A549 (cell line): ENCODE measurements at regions of chr12 and their contacts with region 1.

Region 1: DNA sequence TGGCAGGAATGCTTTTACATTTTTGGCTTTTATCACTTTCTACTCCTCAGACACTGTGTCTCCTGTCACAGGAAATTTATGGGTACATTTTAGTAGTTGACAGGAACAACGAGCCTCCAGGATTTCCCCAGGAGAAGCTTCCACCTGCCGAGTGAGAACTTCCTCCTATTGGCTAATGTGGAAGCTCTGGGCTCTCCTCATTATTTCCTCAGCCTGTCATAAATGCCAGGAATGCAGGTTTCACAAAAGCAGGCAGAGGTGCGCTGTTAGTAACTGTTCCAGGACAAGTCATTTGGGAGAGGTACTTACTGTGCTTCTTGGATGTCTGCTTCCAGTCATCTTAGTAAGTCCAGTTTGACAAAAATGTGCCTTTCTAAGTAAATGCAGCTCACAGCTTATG is 19.1 kb upstream of the DCP1B start:
- DNase-seq: no peak
- ATAC-seq: no peak
- H3K4me3 ChIP-seq: no peak overlapping the region
- H3K27ac ChIP-seq: no peak overlapping the region
- H3K4me1 ChIP-seq: no peaks in the 10 kb centered on the region
- CTCF ChIP-seq: no peak
- EP300 ChIP-seq: no peak
- POLR2A ChIP-seq: no peak
- RAD21 ChIP-seq: no peak

Region 2: DNA sequence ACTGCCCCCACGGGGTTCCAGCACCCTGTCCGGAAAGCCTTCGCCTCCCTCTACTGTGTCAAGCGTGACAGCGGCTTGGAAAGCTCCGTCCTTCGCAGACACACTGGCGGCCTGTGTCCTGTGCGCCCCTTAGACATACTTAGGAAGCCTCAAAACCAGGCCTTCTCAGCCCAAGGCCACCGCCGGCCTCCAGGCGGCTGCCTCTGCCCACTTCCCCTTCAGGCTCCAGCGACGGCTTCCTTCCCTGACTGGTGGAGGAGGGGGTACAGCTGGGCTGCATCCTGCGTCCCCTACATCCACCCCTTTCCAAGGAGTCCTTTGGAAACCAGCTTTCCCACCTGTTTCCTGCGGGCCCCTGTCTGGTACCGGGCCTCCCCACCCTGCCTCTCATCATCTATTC is 102.4 kb before region 1 on chr12:
- CTCF ChIA-PET with region 1: no interaction called
- POLR2A ChIA-PET with region 1: no interaction called
- DNase-seq: no peak
- ATAC-seq: no peak
- H3K4me3 ChIP-seq: no peak overlapping the region
- H3K27ac ChIP-seq: no peak overlapping the region
- H3K4me1 ChIP-seq: no peaks in the 10 kb centered on the region
- CTCF ChIP-seq: no peak
- EP300 ChIP-seq: no peak
- POLR2A ChIP-seq: no peak
- RAD21 ChIP-seq: no peak

Region 3: GRCh38 chr12:1966561-1967226 is 56.7 kb before region 1 on chr12:
- CTCF ChIA-PET with region 1: no interaction called
- POLR2A ChIA-PET with region 1: no interaction called
- DNase-seq: no peak
- ATAC-seq: no peak
- H3K4me3 ChIP-seq: no peak overlapping the region
- H3K27ac ChIP-seq: no peak overlapping the region
- H3K4me1 ChIP-seq: no peaks in the 10 kb centered on the region
- CTCF ChIP-seq: no peak
- EP300 ChIP-seq: no peak
- POLR2A ChIP-seq: no peak
- RAD21 ChIP-seq: no peak

Region 4: GRCh38 chr12:2011643-2012607 is 11.4 kb before region 1 on chr12:
- CTCF ChIA-PET with region 1: interaction called, 10 read pairs
- POLR2A ChIA-PET with region 1: no interaction called
- DNase-seq: no peak
- ATAC-seq: no peak
- H3K4me3 ChIP-seq: no peak overlapping the region
- H3K27ac ChIP-seq: no peak overlapping the region
- H3K4me1 ChIP-seq: no peaks in the 10 kb centered on the region
- CTCF ChIP-seq: no peak
- EP300 ChIP-seq: no peak
- POLR2A ChIP-seq: no peak
- RAD21 ChIP-seq: no peak

Region 5: DNA sequence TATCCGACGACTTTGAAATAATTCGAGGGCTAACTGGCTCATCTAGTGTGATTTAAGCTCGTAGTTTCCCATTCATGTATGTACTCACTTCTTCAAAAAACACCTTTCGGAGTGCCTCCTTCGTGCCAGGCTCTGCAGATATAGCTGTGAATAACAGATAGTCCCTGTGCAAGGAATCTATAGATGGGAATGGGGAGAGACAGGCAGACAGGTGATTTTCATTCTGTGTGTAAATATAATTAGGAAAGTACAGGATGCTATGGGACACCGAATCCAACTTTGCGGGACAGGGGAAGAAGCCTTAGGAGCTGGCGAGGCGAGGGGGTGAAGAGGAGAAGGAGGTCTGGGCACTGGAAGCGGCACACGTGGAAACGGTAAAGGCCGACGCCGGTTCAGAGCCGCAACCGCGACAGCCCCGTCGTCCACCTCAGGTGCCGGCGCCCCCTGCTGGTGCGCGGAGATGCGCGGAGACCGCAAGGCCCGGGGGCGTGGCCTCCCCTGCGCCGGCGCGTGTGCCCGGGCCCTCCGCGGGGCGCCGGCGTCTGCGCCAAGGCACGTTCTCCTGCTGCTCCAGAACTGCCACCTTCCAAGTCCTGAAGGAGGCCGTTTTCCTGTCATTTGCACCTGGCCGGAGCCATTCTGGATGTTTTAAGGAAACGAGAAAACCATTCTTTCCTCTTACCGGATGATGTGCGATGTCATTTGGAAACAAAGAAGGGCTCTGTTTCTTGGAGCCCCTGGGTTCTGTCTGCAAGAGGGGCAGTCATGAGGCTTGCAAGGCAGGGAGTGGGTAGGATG is 11.5 kb after region 1 on chr12:
- CTCF ChIA-PET with region 1: interaction called, 11 read pairs
- POLR2A ChIA-PET with region 1: no interaction called
- DNase-seq: peak; percentile 75 to 83
- ATAC-seq: peak; percentile 95 to 99
- H3K4me3 ChIP-seq: peak overlapping the region; percentile 34
- H3K27ac ChIP-seq: peak overlapping the region; percentile 35 to 57; a peak in 3 of 6 replicates
- H3K4me1 ChIP-seq: 0 out of 3 replicates have a peak, but pooled peaks cover 3% of the 10 kb centered on the region
- CTCF ChIP-seq: peak; percentile 85
- EP300 ChIP-seq: no peak
- POLR2A ChIP-seq: peak; percentile 37; the same call in 1 of the 2 replicates
- RAD21 ChIP-seq: peak; percentile 58 to 74